Panc1 (cell line): ENCODE measurements at regions of chr17 and their contacts with region 1.

Region 1: GRCh38 chr17:43006639-43007551 is at the start of gene IFI35:
- DNase-seq: no peak
- ATAC-seq: peak; percentile 85
- H3K4me3 ChIP-seq: peak within 1 kb of the TSS; percentile 64 to 92
- H3K27ac ChIP-seq: peak within 1 kb of the TSS; percentile 92
- H3K4me1 ChIP-seq: peaks cover 5% of the 10 kb centered on the region; the same call in 1 of the 2 replicates
- H3K27me3 ChIP-seq: no peaks in the 10 kb centered on the region
- CTCF ChIP-seq: no peak
- total RNA-seq, gene IFI35: 42.6 TPM

Region 2: DNA sequence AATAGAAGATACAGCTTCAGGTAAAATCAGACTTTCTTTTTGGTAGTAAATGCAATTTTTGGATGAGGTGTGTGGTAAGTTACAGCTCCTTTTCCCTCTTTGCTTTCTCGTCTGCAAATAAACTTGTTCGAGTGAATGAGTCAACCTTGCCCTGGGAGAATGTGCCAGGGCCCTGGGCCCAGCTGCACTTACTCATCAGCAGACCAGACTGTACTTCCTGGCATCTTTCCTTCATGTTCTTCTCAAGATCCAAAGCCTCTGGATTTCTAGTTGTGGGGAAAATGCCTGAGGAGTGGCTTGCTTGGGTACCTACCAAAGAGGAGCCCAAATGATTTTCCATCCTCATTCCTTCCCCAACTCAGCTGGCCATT is 111.7 kb before region 1 on chr17:
- CTCF ChIA-PET with region 1: no interaction called
- POLR2A ChIA-PET with region 1: interaction called, 11 read pairs
- in situ Hi-C with region 1: no loop called
- intact Hi-C with region 1: no loop called
- DNase-seq: peak; percentile 10
- ATAC-seq: peak; percentile 89
- H3K4me3 ChIP-seq: no peak overlapping the region
- H3K27ac ChIP-seq: no peak overlapping the region
- H3K4me1 ChIP-seq: no peaks in the 10 kb centered on the region
- H3K27me3 ChIP-seq: no peaks in the 10 kb centered on the region
- CTCF ChIP-seq: no peak